PC-3 (cell line): ENCODE measurements at regions of chr11 and their contacts with region 1.

Region 1: GRCh38 chr11:62726915-62727763 is at the start of gene HNRNPUL2:
- DNase-seq: peak; percentile 100
- ATAC-seq: peak; percentile 82
- H3K4me3 ChIP-seq: peak within 1 kb of the TSS; percentile 91
- H3K27ac ChIP-seq: peak within 1 kb of the TSS; percentile 90
- H3K4me1 ChIP-seq: peaks cover 9% of the 10 kb centered on the region
- H3K27me3 ChIP-seq: no peaks in the 10 kb centered on the region
- CTCF ChIP-seq: no peak
- total RNA-seq, gene HNRNPUL2: 15.5 and 25.4 TPM in 2 replicates

Region 2: GRCh38 chr11:62487738-62488551 is 239.2 kb before region 1 on chr11:
- CTCF ChIA-PET with region 1: no interaction called
- POLR2A ChIA-PET with region 1: no interaction called
- intact Hi-C with region 1: no loop called
- DNase-seq: no peak
- ATAC-seq: no peak
- H3K4me3 ChIP-seq: no peak overlapping the region
- H3K27ac ChIP-seq: no peak overlapping the region
- H3K4me1 ChIP-seq: no peaks in the 10 kb centered on the region
- H3K27me3 ChIP-seq: no peaks in the 10 kb centered on the region
- CTCF ChIP-seq: no peak

Region 3: GRCh38 chr11:62567018-62567633 is 160.0 kb before region 1 on chr11:
- CTCF ChIA-PET with region 1: no interaction called
- POLR2A ChIA-PET with region 1: no interaction called
- intact Hi-C with region 1: no loop called
- DNase-seq: no peak
- ATAC-seq: no peak
- H3K4me3 ChIP-seq: no peak overlapping the region
- H3K27ac ChIP-seq: no peak overlapping the region
- H3K4me1 ChIP-seq: peaks cover 22% of the 10 kb centered on the region
- H3K27me3 ChIP-seq: no peaks in the 10 kb centered on the region
- CTCF ChIP-seq: no peak

Region 4: DNA sequence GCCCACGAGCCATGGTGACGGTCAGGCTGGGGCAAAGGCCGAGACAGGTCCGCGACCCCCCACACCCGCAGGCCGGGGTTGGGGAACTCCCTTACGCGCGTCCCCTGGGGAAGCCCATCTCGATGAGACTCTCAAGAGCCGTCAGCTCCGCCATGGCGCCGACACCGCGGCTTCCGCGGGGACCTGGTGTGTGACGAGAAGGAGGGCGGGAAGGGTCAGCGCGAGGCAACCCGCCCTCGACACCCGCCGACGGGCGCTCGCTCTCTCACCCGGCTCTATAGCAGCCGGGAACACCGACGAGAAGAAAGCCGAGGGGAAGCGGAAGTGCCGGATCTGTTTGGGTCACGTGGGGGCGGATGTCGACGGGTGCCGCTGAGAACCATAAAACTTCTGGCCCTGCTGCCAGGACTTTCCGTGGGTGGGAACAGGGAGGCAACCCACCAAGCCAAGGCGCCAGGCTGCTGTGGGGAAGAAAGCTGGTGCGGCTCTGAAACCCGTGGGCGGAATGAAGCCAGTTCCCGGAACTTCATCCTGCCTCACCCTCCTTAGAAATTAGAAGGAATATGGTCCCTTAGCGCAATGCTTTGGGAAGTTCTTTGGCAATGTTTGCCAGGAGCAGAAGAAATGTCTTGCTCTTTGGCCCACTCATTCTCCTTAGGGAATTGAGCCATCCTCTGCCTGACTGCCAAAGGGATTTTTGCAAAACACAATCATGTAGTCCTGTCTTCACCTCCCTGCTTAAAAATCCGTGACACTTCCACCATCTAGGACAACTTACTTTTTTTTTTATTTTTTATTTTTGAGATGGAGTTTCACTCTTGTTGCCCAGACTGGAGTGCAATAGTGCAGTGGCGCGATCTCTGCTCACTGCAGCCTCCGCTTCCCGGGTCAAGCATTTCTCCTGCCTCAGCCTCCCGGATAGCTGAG is 48.1 kb before region 1 on chr11 and contains the start of gene UBXN1:
- CTCF ChIA-PET with region 1: no interaction called
- POLR2A ChIA-PET with region 1: interaction called, 5 read pairs
- intact Hi-C with region 1: loop called (anchors 5 kb)
- DNase-seq: peak; percentile 86
- ATAC-seq: peak; percentile 62
- H3K4me3 ChIP-seq: peak within 1 kb of the TSS; percentile 98
- H3K27ac ChIP-seq: peak within 1 kb of the TSS; percentile 53
- H3K4me1 ChIP-seq: peaks cover 23% of the 10 kb centered on the region
- H3K27me3 ChIP-seq: no peaks in the 10 kb centered on the region
- CTCF ChIP-seq: no peak
- total RNA-seq, gene UBXN1: 190 and 311 TPM in 2 replicates

Region 5: DNA sequence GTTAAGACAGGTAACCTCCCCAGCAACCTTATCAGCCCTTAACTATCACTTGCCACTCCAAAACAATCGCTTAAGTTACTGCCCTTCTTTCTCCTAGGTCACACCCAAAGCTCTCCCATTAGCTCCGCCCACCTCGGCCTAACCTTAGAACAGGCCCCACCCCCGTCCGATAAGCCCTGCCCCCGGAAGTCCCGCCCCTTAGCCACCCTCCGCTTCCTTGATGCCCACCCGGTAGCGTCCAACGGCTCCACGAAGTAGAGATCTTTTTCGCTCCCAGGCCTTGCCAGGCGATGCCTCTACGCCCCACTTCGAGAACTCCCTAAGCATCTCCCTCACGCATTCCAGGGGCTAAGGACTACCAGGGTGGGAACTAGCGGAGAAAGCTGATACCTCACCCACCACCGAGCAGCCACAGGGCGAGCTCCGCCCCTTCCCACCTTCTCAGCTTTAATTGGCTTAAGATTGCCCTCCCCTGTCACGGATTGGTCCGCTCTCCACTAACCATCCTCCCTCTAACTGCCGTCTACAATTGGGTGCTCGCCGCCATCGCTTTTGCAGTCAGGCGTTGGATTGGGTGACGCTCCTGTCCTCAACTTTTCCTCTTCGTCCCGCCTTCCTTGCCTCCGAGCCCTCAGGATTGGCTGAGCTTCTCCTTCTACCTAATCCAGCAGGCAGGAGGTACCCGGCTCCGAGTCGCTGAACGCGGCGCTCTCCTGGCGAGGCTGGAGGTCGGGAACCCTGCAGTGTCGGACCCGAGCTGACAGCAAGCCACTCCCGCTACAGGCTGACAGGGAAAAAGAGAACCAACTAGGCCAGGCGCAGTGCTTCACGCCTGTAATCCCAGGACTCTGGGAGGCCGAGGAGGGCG is 26.8 kb after region 1 on chr11 and contains the start of gene ZBTB3:
- CTCF ChIA-PET with region 1: interaction called, 3 read pairs
- POLR2A ChIA-PET with region 1: interaction called, 21 read pairs
- intact Hi-C with region 1: loop called (anchors 1 kb)
- DNase-seq: peak; percentile 99
- ATAC-seq: peak; percentile 98
- H3K4me3 ChIP-seq: peak within 1 kb of the TSS; percentile 87
- H3K27ac ChIP-seq: peak within 1 kb of the TSS; percentile 73
- H3K4me1 ChIP-seq: peaks cover 16% of the 10 kb centered on the region
- H3K27me3 ChIP-seq: no peaks in the 10 kb centered on the region
- CTCF ChIP-seq: no peak
- total RNA-seq, gene ZBTB3: 2.2 and 3.3 TPM in 2 replicates

Region 6: GRCh38 chr11:62841361-62842184 is 114.4 kb after region 1 on chr11:
- CTCF ChIA-PET with region 1: no interaction called
- POLR2A ChIA-PET with region 1: interaction called, 7 read pairs
- intact Hi-C with region 1: loop called (anchors 2 kb)
- DNase-seq: peak; percentile 100
- ATAC-seq: peak; percentile 75
- H3K4me3 ChIP-seq: peak overlapping the region; percentile 64
- H3K27ac ChIP-seq: peak overlapping the region; percentile 90
- H3K4me1 ChIP-seq: peaks cover 6% of the 10 kb centered on the region
- H3K27me3 ChIP-seq: no peaks in the 10 kb centered on the region
- CTCF ChIP-seq: no peak

Region 7: DNA sequence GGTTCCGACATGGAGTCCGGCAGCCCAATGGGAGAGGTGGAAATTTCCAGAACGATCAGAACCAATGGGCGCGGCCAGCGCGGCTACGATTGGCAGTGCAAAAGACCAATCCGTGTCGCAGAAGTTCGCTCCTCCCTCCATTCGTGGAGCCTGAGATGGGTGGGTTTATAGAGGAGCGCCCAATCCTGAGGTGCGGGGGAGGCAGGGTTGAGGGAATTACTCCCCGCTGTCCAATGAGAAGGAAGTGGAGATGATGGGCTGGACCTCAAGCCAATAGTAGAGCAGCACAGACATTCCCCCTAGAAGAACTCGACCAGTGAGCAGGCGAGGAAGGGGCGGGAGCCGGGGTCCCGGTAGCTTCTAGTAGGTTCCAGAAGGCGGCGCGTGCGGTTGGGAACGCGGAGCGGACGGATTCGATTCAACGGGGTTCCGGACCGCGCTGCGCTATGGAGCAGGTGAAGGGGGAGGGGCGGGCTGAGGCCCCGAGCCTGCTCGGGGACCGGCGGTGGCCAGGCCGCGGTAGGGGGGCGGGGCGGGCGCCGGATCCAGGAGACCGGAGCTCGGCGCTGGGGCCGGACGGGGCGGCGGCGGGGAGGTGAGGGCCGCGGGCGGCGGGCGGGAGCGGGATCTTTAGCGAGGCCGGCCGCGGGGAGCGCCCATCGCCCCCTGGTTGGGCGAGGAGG is 1458.8 kb after region 1 on chr11 and contains the start of gene STIP1:
- CTCF ChIA-PET with region 1: no interaction called
- POLR2A ChIA-PET with region 1: no interaction called
- intact Hi-C with region 1: loop called (anchors 10 kb)
- DNase-seq: peak; percentile 100
- ATAC-seq: peak; percentile 86
- H3K4me3 ChIP-seq: peak within 1 kb of the TSS; percentile 81
- H3K27ac ChIP-seq: peak within 1 kb of the TSS; percentile 59
- H3K4me1 ChIP-seq: peaks cover 27% of the 10 kb centered on the region
- H3K27me3 ChIP-seq: no peaks in the 10 kb centered on the region
- CTCF ChIP-seq: peak; percentile 39; the same call in 1 of the 2 replicates
- total RNA-seq, gene STIP1: 543 and 557 TPM in 2 replicates